ENCODE measurements at regions of chr9 and their contacts with region 1.

Region 1: DNA sequence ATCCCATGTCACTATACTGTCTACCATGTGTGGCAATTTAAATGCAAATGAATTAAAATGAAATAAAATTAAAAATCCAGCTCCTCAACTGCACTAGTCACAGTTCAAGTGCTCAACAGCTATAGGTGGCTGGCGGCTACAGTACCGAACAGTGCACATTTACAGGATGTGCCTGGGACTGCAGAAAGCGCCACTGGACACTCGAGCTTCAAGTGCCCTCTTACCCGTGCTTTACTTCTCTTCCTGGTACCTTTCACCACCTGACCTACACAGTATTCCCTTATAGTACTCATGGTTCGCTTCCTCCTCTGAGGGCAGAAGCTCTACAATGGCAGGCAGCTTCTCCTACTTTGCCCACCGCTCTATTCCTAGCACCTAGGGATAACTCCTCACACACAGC is 166.6 kb downstream of the FANCC start:
- DNase-seq: no peak
- ATAC-seq: no peak

Region 2: GRCh38 chr9:94576131-94576530 is 574.8 kb before region 1 on chr9:
- intact Hi-C with region 1: loop called (anchors 5 kb)
- DNase-seq: no peak
- ATAC-seq: no peak

Region 3: GRCh38 chr9:95073021-95073607 is 77.8 kb before region 1 on chr9:
- intact Hi-C with region 1: no loop called
- DNase-seq: peak; percentile 34
- ATAC-seq: peak; percentile 11

Measured in left ventricle myocardium superior (tissue), 1 donor.